T-cell (primary cell): ENCODE measurements at regions of chr12 and their contacts with region 1.

Region 1: DNA sequence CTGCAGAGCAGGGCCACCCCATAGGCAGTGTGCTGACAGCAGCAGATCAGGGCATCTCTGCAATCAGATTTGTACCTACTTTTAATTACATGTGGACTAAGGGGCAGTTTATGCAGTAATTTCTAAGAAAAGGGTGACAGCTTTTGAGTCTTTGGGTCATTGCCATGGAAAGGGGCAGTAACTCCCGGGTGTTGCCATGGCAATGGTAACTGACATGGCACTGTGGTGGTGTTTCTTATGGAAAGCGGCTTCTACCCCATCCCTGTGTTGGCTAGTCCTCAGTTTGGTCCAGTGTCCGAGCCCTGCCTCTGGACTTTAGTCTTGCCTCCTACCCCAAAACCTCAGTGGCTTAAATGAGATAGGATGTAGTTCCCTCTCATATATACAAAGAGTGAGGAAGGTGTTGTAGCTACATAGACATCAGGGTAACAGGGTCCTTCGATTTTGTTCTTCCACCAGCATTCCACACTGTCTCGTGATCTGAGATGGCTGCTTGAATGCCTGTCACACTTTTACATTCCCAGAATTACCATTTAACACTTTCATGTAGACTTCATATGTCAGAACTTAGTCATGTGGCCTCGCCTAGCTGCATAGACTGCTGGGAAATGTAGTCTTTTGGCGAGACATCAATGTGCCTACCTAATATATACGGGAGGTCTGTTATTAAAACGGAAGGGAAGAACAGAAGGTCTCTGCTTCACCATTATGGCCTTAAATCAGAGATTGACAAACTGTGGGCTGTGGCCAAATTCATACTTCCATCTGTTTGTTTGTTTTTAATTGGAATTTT is 10.9 kb upstream of the HRK start:
- DNase-seq: no peak
- ATAC-seq: no peak
- H3K4me3 ChIP-seq: no peak overlapping the region
- H3K4me3 Mint-ChIP-seq: no peak overlapping the region
- H3K27ac ChIP-seq: no peak overlapping the region
- H3K27ac Mint-ChIP-seq: no peak overlapping the region
- H3K4me1 ChIP-seq: no peaks in the 10 kb centered on the region
- H3K4me1 Mint-ChIP-seq: no peaks in the 10 kb centered on the region
- H3K27me3 ChIP-seq: peaks cover 2 to 11% of the 10 kb centered on the region in 2 experiments
- H3K27me3 Mint-ChIP-seq: peaks cover 3 to 10% of the 10 kb centered on the region in 2 donors

Region 2: DNA sequence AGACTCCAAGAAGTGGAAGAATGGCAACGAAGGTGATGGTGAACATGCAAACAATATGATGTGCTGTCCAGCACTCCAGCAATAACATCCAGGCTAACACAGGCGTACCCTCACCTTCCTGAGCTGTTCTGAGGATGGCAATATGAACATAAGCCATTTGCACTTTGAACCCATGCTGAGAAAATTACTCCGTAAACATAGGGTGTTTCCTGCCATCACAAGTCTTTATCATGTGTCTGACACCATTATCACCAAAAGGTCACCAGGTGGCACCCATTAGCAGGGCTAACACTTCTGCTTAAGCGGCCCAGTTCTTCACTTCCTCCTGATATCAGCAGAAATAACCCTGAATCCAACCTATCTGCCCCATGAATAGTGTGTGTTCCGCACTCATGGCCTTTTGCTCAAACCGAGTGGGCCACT is 1097.5 kb before region 1 on chr12:
- CTCF ChIA-PET with region 1: no interaction called
- POLR2A ChIA-PET with region 1: no interaction called
- DNase-seq: no peak
- ATAC-seq: no peak
- H3K4me3 ChIP-seq: no peak overlapping the region
- H3K4me3 Mint-ChIP-seq: no peak overlapping the region
- H3K27ac ChIP-seq: no peak overlapping the region
- H3K27ac Mint-ChIP-seq: no peak overlapping the region
- H3K4me1 ChIP-seq: no peaks in the 10 kb centered on the region
- H3K4me1 Mint-ChIP-seq: no peaks in the 10 kb centered on the region
- H3K27me3 ChIP-seq: peaks cover 0 to 7% of the 10 kb centered on the region in 2 experiments
- H3K27me3 Mint-ChIP-seq: peaks cover 11 to 22% of the 10 kb centered on the region in 2 donors

Region 3: DNA sequence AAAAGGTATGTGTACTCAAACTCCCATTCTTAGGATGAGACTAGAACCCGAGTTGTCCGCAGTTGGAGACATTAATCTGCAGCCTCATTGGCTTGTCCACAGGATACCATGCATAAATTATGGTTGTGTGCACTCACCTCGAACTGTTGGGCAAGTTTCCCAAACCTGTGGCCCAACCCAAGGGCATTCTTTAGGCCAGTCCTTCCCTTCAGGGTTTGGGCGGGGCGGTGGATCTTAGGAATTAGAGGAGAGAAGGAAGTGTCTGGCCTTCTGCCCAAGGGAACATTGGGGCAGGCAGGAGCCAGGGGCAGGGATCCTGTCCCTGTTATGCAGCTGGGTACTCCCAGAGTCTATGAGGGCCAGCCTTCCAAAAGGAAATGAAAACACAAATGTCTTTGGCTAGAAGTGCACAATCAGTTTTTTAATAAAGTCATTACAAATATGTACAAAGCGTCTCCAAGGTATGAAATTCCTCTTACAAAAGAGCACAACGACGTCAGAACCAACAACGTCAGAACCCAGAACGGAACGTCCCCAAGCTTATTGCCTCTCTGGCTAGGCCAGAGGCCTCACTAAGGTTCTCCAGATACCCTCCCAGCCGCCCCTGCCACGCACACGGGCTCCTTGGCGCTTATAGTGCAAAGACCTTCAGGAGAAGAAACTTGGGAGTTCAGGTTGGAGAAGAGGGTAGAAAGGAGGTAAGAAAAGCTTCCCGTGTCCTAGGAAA is 36.2 kb before region 1 on chr12:
- CTCF ChIA-PET with region 1: interaction called in 1 of 2 experiments, 10 read pairs
- POLR2A ChIA-PET with region 1: no interaction called
- DNase-seq: no peak
- ATAC-seq: no peak
- H3K4me3 ChIP-seq: no peak overlapping the region
- H3K4me3 Mint-ChIP-seq: no peak overlapping the region
- H3K27ac ChIP-seq: no peak overlapping the region
- H3K27ac Mint-ChIP-seq: no peak overlapping the region
- H3K4me1 ChIP-seq: peaks cover 0 to 1% of the 10 kb centered on the region in 2 experiments
- H3K4me1 Mint-ChIP-seq: peaks cover 0 to 17% (median 1%) of the 10 kb centered on the region in 3 donors
- H3K27me3 ChIP-seq: peaks cover 0 to 42% of the 10 kb centered on the region in 2 experiments
- H3K27me3 Mint-ChIP-seq: peaks cover 26 to 46% of the 10 kb centered on the region in 2 donors